ENCODE measurements at regions of chr21 and their contacts with region 1.

Region 1: GRCh38 chr21:38159355-38159754 is 97.4 kb upstream of the KCNJ15 start:
- DNase-seq: peak; percentile 39 to 72
- H3K4me3 ChIP-seq: no peak overlapping the region
- H3K27ac ChIP-seq: no peak overlapping the region
- H3K4me1 ChIP-seq: no peaks in the 10 kb centered on the region
- H3K27me3 ChIP-seq: no peaks in the 10 kb centered on the region
- CTCF ChIP-seq: peak; percentile 66 to 88 (median 75)
- EP300 ChIP-seq: no peak
- POLR2A ChIP-seq: no peak
- RAD21 ChIP-seq: peak; percentile 81 to 88

Region 2: DNA sequence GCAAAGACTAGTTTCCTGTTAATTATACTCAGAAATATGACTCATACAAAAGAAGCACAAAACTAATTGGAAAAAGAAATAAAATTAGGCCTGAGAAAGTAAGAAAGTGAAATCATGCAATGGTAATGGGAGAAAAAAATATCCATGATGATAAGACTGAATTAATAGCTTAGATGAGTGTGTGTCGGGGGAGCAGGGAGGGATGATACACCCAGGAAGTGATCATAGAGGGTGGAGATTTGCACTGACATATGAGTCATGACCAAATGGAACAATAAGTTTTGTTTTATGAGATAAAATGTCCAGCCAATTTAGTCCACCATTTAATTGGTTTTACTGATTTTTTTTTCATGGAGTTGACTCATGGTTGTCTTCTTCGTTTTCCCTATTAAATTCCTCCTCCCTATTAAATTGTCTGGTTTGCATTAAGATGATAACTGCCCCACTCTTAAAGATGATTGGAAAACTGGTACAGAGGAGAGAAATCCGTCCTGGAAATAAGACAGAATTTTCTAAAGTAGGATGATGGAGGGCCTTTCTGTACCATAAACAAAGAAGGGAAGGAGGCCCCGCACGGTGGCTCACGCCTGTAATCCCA is 131.4 kb before region 1 on chr21:
- CTCF ChIA-PET with region 1: no interaction called
- POLR2A ChIA-PET with region 1: no interaction called
- DNase-seq: no peak
- H3K4me3 ChIP-seq: no peak overlapping the region
- H3K27ac ChIP-seq: no peak overlapping the region
- H3K4me1 ChIP-seq: no peaks in the 10 kb centered on the region
- H3K27me3 ChIP-seq: no peaks in the 10 kb centered on the region
- CTCF ChIP-seq: no peak
- EP300 ChIP-seq: no peak
- POLR2A ChIP-seq: no peak
- RAD21 ChIP-seq: no peak

Region 3: GRCh38 chr21:38148046-38148445 is 11.3 kb before region 1 on chr21:
- CTCF ChIA-PET with region 1: interaction called, 34 read pairs
- POLR2A ChIA-PET with region 1: no interaction called
- DNase-seq: no peak
- H3K4me3 ChIP-seq: no peak overlapping the region
- H3K27ac ChIP-seq: no peak overlapping the region
- H3K4me1 ChIP-seq: peaks cover 0 to 4% (median 0%) of the 10 kb centered on the region in 4 experiments; a peak in 1 of 7 replicates
- H3K27me3 ChIP-seq: no peaks in the 10 kb centered on the region; a peak in 2 of 7 replicates
- CTCF ChIP-seq: no peak
- EP300 ChIP-seq: no peak
- POLR2A ChIP-seq: no peak
- RAD21 ChIP-seq: no peak

Measured in H1 (cell line).